PC-3 (cell line): ENCODE measurements at regions of chr14 and their contacts with region 1.

Region 1: GRCh38 chr14:28756884-28757570 is 9.6 kb upstream of the FOXG1 start:
- DNase-seq: peak; percentile 63
- ATAC-seq: peak; percentile 70
- H3K4me3 ChIP-seq: peak overlapping the region; percentile 42
- H3K27ac ChIP-seq: no peak overlapping the region
- H3K4me1 ChIP-seq: peaks cover 4% of the 10 kb centered on the region; the same call in 1 of the 2 replicates
- H3K27me3 ChIP-seq: peaks cover 75% of the 10 kb centered on the region
- CTCF ChIP-seq: peak; percentile 88

Region 2: DNA sequence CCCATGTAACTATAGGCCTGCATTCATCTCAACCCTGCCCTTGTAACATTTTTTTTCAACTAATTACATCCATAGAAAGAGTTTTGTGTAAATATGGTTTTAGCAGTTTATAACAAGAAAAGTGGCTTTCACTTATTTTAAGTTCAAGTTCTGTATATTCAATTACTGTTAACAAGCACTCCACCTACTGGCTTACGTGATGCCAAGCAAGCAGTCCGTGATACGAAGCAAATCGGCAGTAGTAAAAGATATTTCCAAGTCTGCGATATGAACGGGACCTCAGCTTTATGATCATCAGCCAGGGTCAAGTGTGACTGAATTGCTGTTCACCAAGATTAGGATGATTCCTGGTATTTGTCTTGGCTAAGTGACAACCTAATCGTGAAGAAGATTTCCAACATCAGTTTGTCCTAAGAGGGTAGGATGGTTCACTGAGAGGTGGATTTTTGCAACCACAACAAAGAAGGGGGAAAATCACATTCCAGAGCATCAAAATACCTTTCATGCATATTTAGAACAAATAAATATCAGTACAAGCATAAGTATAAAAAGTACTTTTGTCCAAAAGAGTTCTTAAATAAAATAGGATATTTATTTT is 465.7 kb after region 1 on chr14:
- CTCF ChIA-PET with region 1: no interaction called
- POLR2A ChIA-PET with region 1: no interaction called
- intact Hi-C with region 1: loop called (anchors 1 kb)
- DNase-seq: peak; percentile 59
- ATAC-seq: peak; percentile 95
- H3K4me3 ChIP-seq: no peak overlapping the region
- H3K27ac ChIP-seq: no peak overlapping the region
- H3K4me1 ChIP-seq: peaks cover 1% of the 10 kb centered on the region
- H3K27me3 ChIP-seq: peaks cover 17% of the 10 kb centered on the region
- CTCF ChIP-seq: peak; percentile 88

Region 3: DNA sequence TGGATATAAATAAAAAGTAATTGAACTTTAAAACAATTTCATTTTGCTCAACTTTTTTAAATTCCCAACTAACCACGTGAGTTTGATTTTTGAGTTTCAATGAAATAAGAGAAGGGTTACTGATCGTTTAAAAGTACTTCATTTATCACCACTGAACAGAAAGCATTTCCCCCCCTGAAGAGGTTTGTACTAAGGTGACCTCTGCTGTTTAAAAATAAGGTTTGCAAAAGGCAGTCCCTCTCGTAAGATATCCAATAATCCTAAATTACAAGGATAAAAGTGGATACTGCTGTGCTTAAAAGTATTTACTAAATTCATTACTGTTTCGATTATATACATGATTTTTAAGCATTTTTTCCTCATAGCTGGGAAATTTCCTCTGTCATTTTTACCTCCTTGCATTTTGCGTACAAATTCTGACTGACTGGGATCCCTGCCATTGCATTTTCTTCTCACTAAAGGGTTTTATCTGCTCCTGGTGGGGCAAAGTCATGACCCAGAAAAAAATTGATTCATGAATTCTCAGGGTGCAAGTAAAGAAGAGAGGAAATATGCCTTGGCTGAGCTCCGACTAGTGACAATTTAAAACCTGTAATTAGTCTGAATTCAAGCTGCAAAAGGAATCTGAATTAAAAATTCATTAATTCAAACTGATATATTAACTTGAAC is 706.8 kb after region 1 on chr14:
- CTCF ChIA-PET with region 1: no interaction called
- POLR2A ChIA-PET with region 1: no interaction called
- intact Hi-C with region 1: loop called (anchors 1 kb)
- DNase-seq: peak; percentile 29
- ATAC-seq: peak; percentile 64
- H3K4me3 ChIP-seq: no peak overlapping the region
- H3K27ac ChIP-seq: no peak overlapping the region
- H3K4me1 ChIP-seq: peaks cover 1% of the 10 kb centered on the region
- H3K27me3 ChIP-seq: peaks cover 30% of the 10 kb centered on the region; the same call in 1 of the 2 replicates
- CTCF ChIP-seq: peak; percentile 52

Region 4: GRCh38 chr14:29518335-29518734 is 761.3 kb after region 1 on chr14:
- CTCF ChIA-PET with region 1: no interaction called
- POLR2A ChIA-PET with region 1: no interaction called
- intact Hi-C with region 1: loop called (anchors 5 kb)
- DNase-seq: peak; percentile 39
- ATAC-seq: no peak
- H3K4me3 ChIP-seq: no peak overlapping the region
- H3K27ac ChIP-seq: no peak overlapping the region
- H3K4me1 ChIP-seq: no peaks in the 10 kb centered on the region
- H3K27me3 ChIP-seq: peaks cover 21% of the 10 kb centered on the region
- CTCF ChIP-seq: peak; percentile 53

Region 5: DNA sequence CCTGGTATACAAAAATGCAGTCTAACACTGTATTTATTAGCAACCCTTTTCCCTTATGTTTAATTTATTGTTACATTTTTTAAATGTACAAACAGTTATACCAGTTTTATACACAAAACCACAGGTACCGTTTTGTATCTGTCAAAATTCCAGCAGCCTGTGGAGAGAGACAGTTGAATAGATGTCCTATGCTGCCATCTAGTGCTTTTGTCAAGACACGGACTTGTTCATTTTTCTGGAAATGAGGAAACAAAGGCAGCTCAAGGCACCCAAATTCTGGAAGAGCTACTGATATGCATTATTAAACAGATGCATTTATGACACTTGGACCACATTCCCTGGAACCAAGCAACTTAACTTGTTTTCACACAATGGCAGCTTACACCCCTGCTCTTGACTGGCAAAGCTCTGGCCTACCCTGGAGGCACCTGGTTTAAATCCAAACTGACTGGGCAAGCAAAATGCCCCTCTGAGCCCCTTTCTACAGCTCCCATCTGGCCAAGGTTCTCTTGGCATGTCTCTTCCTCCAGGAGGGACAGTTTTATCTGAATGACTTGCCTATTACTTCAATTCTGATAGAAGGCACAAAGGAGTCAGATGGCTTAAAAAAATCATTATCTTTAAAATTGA is 1457.5 kb after region 1 on chr14:
- CTCF ChIA-PET with region 1: interaction called, 3 read pairs
- POLR2A ChIA-PET with region 1: no interaction called
- intact Hi-C with region 1: loop called (anchors 2 kb)
- DNase-seq: peak; percentile 74
- ATAC-seq: peak; percentile 79
- H3K4me3 ChIP-seq: no peak overlapping the region
- H3K27ac ChIP-seq: no peak overlapping the region
- H3K4me1 ChIP-seq: no peaks in the 10 kb centered on the region
- H3K27me3 ChIP-seq: no peaks in the 10 kb centered on the region
- CTCF ChIP-seq: peak; percentile 89